Pancreas (tissue), 10 donors: ENCODE measurements at regions of chr22 and their contacts with region 1.

Region 1: DNA sequence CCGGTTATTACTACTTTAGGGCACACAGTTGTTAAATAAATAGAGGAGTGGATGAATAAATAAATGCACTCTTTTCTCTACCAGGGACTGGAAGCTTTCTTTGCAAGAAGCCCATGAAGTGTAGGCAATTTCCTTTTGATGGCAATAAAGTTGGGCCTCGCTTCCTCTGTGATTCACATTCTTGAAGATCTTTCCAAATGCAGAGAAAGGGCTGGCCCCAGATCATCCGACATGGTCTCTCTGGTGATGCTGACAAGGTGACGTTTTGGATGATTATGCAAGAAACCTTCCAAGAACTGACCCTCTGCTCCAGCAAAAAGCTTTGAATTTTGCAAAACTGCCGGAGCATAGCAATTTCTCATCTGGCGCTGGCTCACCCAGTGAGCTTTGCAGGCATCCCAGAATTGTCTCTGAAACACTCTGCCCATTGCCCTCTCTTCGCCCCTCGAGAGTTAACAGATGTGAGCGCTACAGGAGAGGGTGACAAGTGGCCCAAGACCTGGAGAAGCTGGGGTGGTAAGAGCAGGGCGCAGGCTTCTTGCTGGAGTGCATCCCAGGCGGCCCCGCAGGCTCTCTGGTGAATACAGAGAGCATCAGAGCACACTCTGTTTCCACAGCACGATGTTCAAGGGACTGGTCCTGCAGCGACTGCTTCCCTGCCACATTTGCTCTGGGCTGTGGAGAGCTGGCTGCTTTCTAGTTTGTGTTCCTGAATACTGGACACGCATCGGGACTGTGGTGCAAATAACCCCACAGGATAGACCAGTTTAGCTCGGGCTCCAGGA is 11.5 kb upstream of the IFT27 start:
- DNase-seq: no peak
- ATAC-seq: no peak
- H3K4me3 ChIP-seq: no peak overlapping the region
- H3K27ac ChIP-seq: no peak overlapping the region
- H3K4me1 ChIP-seq: no peaks in the 10 kb centered on the region
- H3K27me3 ChIP-seq: peaks cover 0 to 6% (median 0%) of the 10 kb centered on the region in 4 donors
- CTCF ChIP-seq: no peak

Region 2: GRCh38 chr22:36461669-36462649 is 325.4 kb before region 1 on chr22:
- intact Hi-C with region 1: no loop called
- DNase-seq: peak in 5 of 6 donors; percentile 67 to 73 (median 72)
- ATAC-seq: peak; percentile 5 to 50 (median 34)
- H3K4me3 ChIP-seq: no peak overlapping the region
- H3K27ac ChIP-seq: peak overlapping the region; percentile 61 to 97 (median 82)
- H3K4me1 ChIP-seq: peaks cover 21 to 38% (median 28%) of the 10 kb centered on the region in 3 donors
- H3K27me3 ChIP-seq: no peaks in the 10 kb centered on the region
- CTCF ChIP-seq: no peak

Region 3: DNA sequence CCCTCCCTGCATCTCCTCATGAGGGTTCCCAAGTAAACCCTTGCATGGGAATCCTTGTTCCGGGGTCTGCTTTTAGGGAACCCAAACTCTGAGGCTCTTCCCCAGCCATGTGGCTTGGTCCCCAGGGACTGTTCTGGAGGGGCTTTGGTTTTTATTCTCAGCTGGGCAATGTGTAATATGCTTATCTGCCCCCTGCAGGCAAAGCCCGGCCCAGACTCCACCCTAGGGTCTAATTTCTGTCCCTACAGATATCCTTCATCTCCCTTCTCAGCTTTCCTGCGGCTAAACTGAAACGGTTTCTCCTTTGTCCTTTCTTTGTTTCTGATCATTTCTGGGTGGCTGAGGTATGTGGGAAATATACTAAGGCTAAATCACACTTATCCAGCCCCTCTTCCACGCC is 194.7 kb after region 1 on chr22:
- intact Hi-C with region 1: loop called in 1 of 3 experiments (anchors 5 kb)
- DNase-seq: no peak
- ATAC-seq: no peak
- H3K4me3 ChIP-seq: no peak overlapping the region
- H3K27ac ChIP-seq: no peak overlapping the region
- H3K4me1 ChIP-seq: peaks cover 0 to 5% (median 0%) of the 10 kb centered on the region in 3 donors
- H3K27me3 ChIP-seq: peaks cover 0 to 7% (median 0%) of the 10 kb centered on the region in 4 donors
- CTCF ChIP-seq: no peak